Left colon (tissue), 2 donors: ENCODE measurements at regions of chr17 and their contacts with region 1.

Region 1: GRCh38 chr17:32783602-32784001 is 93.3 kb downstream of the MYO1D start:
- DNase-seq: no peak
- ATAC-seq: peak; percentile 93

Region 2: DNA sequence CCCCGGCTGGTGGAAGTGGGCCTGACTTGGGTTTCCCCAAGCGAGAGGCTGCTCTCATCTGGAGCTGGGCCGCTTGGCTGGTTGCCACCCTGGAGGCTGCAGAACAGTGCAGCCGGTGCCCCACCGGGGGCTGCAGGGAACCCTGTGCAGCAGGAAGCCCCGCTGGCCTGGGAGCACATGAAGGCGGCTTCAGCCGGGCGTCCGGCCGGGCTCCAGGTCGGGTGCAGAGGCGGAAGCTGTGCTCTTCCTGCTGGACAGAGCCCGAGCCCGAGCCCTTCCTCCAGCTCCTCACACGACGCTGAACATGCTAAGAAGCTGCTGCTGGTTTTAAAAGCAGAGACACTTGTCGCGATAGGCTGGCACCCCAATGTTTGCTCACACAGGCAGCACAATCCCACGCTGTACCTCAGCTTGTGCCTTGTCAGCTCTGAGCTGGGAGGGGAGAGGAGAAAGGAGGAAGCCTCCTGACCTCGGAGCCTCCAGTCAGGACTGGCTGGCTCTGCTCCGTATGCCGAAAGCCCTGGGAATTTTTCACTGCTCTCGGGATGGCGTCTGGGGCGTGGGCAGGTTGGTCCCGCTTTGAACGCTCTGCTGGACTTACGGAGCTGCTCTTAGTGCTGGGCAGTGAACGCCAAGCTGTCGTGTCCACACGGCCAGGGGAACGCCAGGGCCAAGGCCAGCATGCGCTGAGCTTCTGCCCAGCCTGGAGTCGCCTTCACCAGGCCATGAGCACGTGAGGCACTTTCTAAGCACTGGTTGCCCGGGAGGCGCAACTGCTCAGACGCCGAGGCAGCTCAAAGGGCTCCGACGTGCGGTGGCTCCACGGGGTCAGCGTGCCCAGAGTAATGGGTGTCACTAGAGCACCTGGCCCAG is 288.0 kb before region 1 on chr17:
- intact Hi-C with region 1: no loop called
- DNase-seq: no peak
- ATAC-seq: peak; percentile 6

Region 3: DNA sequence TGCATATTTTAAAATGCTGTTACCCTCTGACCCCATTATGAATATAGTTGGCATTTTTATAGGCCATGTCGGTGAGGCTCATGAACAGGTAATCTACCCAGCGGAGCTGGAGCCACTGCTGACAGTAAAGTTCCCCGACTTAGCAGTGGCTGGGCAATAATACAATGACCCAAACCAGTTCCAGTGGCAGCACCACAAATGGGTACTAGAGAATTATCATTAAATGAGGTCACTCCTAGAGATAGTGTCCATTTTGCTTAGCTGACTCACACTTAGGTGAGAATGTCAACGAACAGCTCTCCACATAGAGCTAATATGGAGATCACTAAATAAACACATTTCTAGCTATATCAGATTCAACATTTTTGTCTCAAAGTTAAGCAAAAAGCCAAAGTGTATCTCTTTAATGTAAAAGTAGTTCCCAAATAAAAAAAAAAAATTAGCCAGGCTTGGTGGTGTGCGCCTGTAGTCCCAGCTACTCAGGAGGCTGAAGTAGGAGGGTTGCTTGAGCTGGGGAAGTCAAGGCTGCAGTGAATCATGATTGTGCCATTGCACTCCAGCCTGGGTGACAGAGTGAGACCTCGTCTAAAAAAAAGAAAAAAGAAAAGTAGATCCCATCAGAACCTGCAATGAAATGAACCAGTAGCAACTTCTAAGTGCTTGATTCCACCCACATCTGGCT is 85.9 kb after region 1 on chr17:
- intact Hi-C with region 1: loop called (anchors 5 to 10 kb)
- DNase-seq: no peak
- ATAC-seq: peak; percentile 78

Region 4: DNA sequence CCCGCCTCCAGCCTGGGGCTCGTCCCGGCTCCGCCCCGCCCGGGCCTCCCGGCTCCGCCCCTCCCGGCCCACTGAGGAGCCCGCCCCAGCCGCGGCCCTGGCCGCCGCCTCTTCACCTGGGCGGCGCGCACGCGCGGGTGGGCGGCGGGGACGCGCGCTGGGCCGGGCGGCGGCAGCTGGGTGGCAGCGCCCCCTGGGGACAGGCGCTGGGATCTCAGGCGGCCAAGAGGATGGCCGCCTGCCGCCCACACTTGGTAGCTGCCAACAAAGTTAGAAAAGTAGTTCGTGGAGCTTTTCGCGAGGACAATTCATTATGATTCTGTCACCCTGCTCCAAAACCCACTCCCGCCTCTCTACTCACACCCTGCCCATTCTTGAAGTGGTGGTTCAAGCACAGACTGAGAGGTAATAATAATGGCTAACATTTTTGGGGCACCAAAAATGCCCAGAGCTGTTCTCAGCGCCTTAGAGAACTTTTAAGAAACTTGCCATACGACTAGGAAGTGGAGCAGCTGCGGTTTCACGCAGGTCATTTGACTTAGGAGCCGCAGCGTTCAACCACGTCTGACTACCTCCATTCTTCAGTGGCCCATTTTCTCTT is 93.7 kb after region 1 on chr17:
- intact Hi-C with region 1: loop called in 1 of 2 experiments (anchors 10 kb)
- DNase-seq: peak; percentile 89 to 95
- ATAC-seq: peak; percentile 87

Region 5: DNA sequence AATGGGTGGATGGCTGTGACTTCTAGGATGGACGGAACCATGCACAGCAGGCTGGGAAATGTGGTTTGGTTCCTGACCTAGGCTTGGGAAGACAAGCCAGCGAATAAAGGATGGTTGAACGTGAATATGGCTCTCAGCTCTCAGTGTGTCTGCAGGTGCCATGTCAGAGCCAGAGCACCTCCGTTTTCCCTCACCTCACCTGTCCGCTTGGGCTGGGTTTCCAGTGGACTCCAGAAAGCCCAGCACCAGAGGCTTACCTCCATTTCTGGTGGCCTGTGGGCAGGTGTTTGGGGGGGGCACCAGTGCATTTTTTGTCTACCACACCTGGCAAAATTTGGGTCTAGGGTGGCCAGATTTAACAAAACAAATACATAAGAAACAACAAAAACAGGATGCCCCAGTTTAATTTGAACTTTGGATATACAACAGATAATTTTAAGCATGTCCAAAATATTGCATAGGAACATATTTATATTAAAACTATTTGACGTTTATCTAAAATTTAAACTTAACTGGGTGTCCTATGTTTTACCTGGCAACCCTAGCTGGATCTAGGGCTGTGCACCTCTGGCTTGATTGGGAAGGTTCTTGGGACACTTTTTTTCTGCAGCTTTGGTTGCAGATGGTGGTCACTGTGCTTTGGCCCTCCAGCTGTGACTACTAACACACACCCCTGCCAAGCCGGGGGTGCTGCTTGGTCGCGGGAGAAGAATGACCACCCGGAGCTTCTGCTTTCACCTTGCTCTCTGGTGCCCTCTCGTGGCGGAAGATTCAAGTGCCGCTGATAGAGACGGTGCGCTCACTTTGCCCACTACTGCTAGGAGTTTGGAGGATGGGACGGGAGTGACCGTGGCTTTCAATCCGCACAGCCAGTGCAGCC is 214.4 kb after region 1 on chr17:
- intact Hi-C with region 1: loop called in 1 of 2 experiments (anchors 10 kb)
- DNase-seq: peak; percentile 72 to 94
- ATAC-seq: peak; percentile 76